ENCODE measurements at regions of chr6 and their contacts with region 1.

Region 1: GRCh38 chr6:20401205-20402091 is at the start of gene E2F3:
- DNase-seq: peak; percentile 100
- H3K4me3 Mint-ChIP-seq: peak within 1 kb of the TSS; percentile 95
- H3K27ac Mint-ChIP-seq: peak within 1 kb of the TSS; percentile 99
- H3K4me1 Mint-ChIP-seq: peaks cover 18% of the 10 kb centered on the region
- H3K27me3 Mint-ChIP-seq: no peaks in the 10 kb centered on the region
- total RNA-seq, gene E2F3: 12.7 to 13.1 TPM

Region 2: DNA sequence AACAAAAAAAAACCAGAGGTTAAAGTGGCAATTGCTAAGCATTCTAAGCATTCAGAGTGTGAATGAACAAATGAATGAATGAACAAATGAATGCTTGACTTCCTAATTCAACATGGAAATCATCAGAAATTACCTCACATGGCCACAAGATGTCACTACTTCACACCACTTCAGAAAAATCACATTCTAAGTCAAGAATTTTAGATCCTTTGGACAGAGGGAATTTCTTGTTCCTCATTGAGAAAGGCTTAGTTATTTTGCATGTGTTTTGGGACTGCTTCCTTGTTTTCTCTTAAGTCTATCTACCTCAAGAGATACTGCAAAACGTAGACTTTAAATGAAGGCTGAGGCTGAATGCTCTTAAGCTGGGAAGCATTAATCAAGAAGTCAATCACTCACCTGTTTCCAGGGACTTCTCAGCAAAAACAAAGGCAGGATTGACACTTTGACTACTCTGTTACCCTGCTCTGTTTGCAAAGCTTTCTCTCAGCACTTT is 309.3 kb before region 1 on chr6:
- CTCF ChIA-PET with region 1: interaction called, 3 read pairs
- intact Hi-C with region 1: loop called (anchors 10 kb)
- DNase-seq: peak; percentile 12
- H3K4me3 Mint-ChIP-seq: no peak overlapping the region
- H3K27ac Mint-ChIP-seq: no peak overlapping the region
- H3K4me1 Mint-ChIP-seq: no peaks in the 10 kb centered on the region
- H3K27me3 Mint-ChIP-seq: no peaks in the 10 kb centered on the region

Region 3: DNA sequence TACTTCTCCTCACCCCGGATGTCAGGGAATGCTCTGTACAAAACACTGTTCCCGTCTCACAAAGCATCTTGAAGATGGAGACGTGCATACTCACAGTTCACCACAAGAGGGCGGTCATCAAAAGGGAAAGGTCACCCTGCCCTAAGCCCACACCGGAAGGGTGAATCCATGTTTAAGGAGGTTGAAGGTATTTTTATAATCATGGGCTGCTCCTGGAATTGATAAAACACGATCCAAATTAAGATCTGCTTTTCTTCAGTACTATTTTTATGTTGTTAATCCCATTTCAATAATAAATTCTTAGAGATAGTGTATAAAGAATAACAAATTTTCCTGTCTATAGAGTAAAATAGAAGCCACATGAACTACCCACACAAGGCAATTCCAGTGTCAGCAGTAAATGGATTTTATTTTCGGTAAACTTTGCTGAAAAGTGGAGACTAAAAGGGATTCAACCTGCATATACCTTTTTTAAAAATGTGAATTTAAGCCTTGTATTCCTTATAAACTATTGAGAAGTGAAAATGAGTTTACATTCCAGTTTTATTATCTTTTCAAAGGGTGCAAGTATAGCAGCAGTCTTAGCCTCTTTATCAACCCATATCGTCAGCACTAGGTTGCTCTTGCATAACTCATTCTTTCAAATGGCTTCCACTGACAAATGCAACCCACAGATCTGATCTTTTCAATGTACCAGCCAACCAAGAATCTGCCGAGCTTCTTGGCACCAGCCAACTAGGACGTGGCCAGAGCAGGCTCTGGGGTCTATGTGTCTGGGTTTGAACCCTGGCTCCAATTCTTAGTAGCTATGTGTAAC is 109.5 kb before region 1 on chr6:
- CTCF ChIA-PET with region 1: interaction called, 13 read pairs
- intact Hi-C with region 1: loop called (anchors 1 kb)
- DNase-seq: peak; percentile 90
- H3K4me3 Mint-ChIP-seq: no peak overlapping the region
- H3K27ac Mint-ChIP-seq: no peak overlapping the region
- H3K4me1 Mint-ChIP-seq: peaks cover 16% of the 10 kb centered on the region
- H3K27me3 Mint-ChIP-seq: no peaks in the 10 kb centered on the region

Region 4: GRCh38 chr6:20366091-20366832 is 35.2 kb before region 1 on chr6:
- CTCF ChIA-PET with region 1: interaction called, 7 read pairs
- intact Hi-C with region 1: loop called (anchors 1 kb)
- DNase-seq: peak; percentile 43
- H3K4me3 Mint-ChIP-seq: peak overlapping the region; percentile 45
- H3K27ac Mint-ChIP-seq: peak overlapping the region; percentile 81
- H3K4me1 Mint-ChIP-seq: peaks cover 56% of the 10 kb centered on the region
- H3K27me3 Mint-ChIP-seq: no peaks in the 10 kb centered on the region

Region 5: GRCh38 chr6:20534295-20535262 is 133.1 kb after region 1 on chr6 and contains the start of gene CDKAL1:
- CTCF ChIA-PET with region 1: interaction called, 10 read pairs
- intact Hi-C with region 1: loop called (anchors 1 kb)
- DNase-seq: peak; percentile 96
- H3K4me3 Mint-ChIP-seq: peak within 1 kb of the TSS; percentile 95
- H3K27ac Mint-ChIP-seq: peak within 1 kb of the TSS; percentile 94
- H3K4me1 Mint-ChIP-seq: peaks cover 33% of the 10 kb centered on the region
- H3K27me3 Mint-ChIP-seq: no peaks in the 10 kb centered on the region
- total RNA-seq, gene CDKAL1: 20.4 TPM

Region 6: GRCh38 chr6:20688710-20689500 is 287.5 kb after region 1 on chr6:
- CTCF ChIA-PET with region 1: no interaction called
- intact Hi-C with region 1: no loop called
- DNase-seq: peak; percentile 20
- H3K4me3 Mint-ChIP-seq: no peak overlapping the region
- H3K27ac Mint-ChIP-seq: no peak overlapping the region
- H3K4me1 Mint-ChIP-seq: peaks cover 61% of the 10 kb centered on the region
- H3K27me3 Mint-ChIP-seq: no peaks in the 10 kb centered on the region

Region 7: DNA sequence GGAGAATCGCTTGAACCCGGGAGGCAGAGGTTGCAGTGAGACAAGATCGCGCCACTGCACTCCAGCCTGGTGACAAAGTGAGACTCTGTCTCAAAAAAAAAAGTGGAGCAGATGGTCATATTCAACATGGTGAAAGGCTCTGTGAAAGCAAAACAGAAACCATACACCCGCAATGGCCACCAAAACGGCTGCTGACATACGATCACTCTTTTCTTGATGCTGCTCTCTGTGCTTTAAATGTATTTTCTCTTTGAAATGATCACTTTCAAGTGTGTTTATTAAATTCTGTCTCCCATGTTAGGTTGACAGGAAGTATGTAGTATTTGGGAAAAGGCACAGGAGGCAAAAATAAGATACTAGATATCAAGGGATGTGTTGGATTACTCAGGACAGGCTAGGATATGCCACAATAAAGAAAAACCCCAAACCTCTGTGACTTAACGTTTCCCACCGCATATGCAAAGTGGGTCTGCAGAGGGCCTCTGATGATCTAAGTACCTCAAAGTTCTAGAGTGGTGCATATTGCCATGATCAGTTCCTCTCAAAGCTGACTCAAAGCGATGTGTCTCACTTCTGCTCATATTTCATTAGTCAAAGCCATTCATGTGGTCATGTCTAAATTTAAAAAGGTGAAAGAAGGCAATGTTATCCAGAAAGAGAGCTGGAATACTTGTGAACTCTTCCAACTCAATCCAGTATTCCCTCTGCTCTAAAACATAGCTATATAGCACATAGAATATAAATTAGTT is 1037.0 kb after region 1 on chr6:
- CTCF ChIA-PET with region 1: no interaction called
- intact Hi-C with region 1: loop called (anchors 5 kb)
- DNase-seq: peak; percentile 68
- H3K4me3 Mint-ChIP-seq: no peak overlapping the region
- H3K27ac Mint-ChIP-seq: no peak overlapping the region
- H3K4me1 Mint-ChIP-seq: peaks cover 15% of the 10 kb centered on the region
- H3K27me3 Mint-ChIP-seq: peaks cover 5% of the 10 kb centered on the region